B cell (primary cell): ENCODE measurements at regions of chr3 and their contacts with region 1.

Region 1: DNA sequence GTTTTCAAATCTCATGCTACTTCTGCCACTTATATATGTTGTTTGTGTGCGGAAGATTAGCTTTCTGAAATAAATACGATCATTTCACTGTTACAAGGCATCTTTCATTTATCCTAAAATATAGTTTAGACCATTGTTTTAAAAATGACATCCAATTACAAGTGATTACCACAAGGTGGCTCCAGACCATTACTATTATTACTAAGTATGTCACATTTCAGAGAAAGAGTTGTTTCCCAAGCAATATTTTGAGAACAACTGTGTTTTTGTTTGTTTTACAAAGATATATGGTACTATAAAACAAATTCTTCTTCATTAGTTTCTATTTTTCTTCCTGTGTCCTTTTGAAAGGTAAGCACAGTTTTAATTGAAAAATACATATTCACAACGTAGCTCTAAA is 136.0 kb upstream of the RAP2B start:
- DNase-seq: peak; percentile 31
- ATAC-seq: no peak
- H3K4me3 ChIP-seq: no peak overlapping the region
- H3K4me3 Mint-ChIP-seq: no peak overlapping the region
- H3K27ac ChIP-seq: no peak overlapping the region
- H3K27ac Mint-ChIP-seq: no peak overlapping the region
- H3K4me1 ChIP-seq: no peaks in the 10 kb centered on the region
- H3K4me1 Mint-ChIP-seq: no peaks in the 10 kb centered on the region
- H3K27me3 ChIP-seq: no peaks in the 10 kb centered on the region
- H3K27me3 Mint-ChIP-seq: peaks cover 15% of the 10 kb centered on the region
- CTCF ChIP-seq: peak; percentile 82

Region 2: DNA sequence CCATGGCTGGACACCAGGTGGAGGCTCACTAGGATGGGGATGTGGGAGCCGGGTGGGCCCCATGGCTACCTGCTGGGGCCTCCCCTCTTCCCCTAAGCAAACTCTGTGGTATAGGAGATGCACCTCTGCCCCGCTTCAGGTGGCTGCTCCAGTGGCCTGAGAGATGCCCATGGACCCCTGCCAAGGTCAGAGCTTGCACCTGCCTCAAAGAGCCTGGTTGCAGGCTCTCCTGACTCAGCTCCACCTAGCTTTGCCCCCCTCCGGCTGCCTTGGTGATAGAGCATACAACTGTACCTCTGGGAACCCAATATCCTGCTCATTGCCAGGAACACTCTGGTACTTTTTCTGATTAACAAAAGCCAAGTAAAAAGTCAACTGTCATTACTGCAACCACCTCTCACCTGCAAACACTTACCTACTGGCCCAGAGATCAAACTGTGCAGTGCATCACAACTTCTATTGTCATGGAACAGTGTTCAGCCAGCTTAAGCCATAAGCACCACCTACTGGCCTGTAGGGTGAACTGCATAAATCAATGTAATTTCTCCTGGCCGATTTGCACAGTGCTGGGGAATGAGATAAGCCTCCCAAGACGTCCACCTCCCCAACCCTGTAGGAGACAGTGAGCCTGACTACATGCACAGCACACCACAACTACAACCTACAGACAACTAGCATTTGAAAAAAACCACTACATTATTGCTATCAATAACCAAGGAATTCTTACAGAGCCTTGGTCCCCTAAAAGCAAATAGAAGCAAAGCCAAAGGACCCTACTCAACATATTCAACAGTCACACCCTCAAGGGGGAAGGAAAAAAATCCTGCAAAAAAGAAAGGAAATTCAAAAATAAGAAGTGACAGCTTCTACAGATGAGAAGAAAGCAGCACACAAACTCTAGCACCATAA is 742.8 kb after region 1 on chr3:
- CTCF ChIA-PET with region 1: interaction called, 22 read pairs
- POLR2A ChIA-PET with region 1: no interaction called
- intact Hi-C with region 1: loop called (anchors 1 kb)
- DNase-seq: peak; percentile 61
- ATAC-seq: peak; percentile 77
- H3K4me3 ChIP-seq: no peak overlapping the region
- H3K4me3 Mint-ChIP-seq: no peak overlapping the region
- H3K27ac ChIP-seq: no peak overlapping the region
- H3K27ac Mint-ChIP-seq: no peak overlapping the region
- H3K4me1 ChIP-seq: no peaks in the 10 kb centered on the region
- H3K4me1 Mint-ChIP-seq: no peaks in the 10 kb centered on the region
- H3K27me3 ChIP-seq: no peaks in the 10 kb centered on the region
- H3K27me3 Mint-ChIP-seq: peaks cover 3% of the 10 kb centered on the region
- CTCF ChIP-seq: peak; percentile 86

Region 3: GRCh38 chr3:154018100-154018696 is 992.2 kb after region 1 on chr3:
- CTCF ChIA-PET with region 1: interaction called, 6 read pairs
- POLR2A ChIA-PET with region 1: no interaction called
- intact Hi-C with region 1: loop called (anchors 5 kb)
- DNase-seq: peak; percentile 10
- ATAC-seq: no peak
- H3K4me3 ChIP-seq: no peak overlapping the region
- H3K4me3 Mint-ChIP-seq: no peak overlapping the region
- H3K27ac ChIP-seq: no peak overlapping the region
- H3K27ac Mint-ChIP-seq: no peak overlapping the region
- H3K4me1 ChIP-seq: no peaks in the 10 kb centered on the region
- H3K4me1 Mint-ChIP-seq: no peaks in the 10 kb centered on the region
- H3K27me3 ChIP-seq: no peaks in the 10 kb centered on the region
- H3K27me3 Mint-ChIP-seq: no peaks in the 10 kb centered on the region
- CTCF ChIP-seq: peak; percentile 65